Mammary epithelial cell (primary cell): ENCODE measurements at regions of chr12 and their contacts with region 1.

Region 1: DNA sequence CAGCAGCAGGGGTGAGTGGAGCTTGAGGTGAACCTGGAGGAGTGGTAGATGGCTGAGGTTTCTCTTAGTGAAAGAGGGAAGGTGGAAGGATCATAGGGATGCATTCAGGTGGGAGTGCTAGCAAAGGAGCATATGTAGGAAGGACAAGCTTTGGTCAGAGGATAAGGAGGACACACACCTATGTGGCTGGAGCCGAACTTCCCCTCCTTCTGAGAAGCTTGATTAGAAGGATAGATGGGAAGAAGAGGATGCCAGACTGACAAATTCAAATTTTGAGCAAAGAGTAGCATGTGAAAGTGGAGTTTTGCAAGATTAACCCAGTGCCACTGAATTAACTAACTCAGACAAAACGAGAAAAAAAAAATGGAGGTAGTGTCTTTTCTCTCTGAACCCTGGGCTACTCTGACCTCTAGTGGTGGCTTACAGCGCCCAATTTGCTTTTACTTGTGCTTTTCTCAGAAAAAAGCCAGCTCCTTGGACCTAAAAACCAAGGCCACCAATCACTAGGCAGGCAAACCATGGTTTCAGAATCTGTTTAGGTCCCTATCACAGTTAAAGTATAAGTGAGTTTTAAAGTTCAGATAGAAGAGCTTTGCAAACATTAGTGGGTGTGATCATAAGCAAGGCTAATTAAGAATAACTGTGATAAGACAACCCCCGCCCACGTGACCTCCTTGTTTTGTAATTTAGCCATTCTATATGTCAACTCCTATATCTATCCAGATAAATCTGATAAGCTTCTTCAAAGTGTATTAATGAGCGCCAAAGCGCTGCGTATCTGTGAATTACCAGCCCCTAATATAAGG is 15.5 kb downstream of the EMP1 start:
- DNase-seq: no peak
- H3K4me3 ChIP-seq: no peak overlapping the region
- H3K27ac ChIP-seq: peak overlapping the region; percentile 92
- H3K4me1 ChIP-seq: peaks cover 50% of the 10 kb centered on the region
- H3K27me3 ChIP-seq: no peaks in the 10 kb centered on the region
- CTCF ChIP-seq: peak; percentile 68 to 71

Region 2: DNA sequence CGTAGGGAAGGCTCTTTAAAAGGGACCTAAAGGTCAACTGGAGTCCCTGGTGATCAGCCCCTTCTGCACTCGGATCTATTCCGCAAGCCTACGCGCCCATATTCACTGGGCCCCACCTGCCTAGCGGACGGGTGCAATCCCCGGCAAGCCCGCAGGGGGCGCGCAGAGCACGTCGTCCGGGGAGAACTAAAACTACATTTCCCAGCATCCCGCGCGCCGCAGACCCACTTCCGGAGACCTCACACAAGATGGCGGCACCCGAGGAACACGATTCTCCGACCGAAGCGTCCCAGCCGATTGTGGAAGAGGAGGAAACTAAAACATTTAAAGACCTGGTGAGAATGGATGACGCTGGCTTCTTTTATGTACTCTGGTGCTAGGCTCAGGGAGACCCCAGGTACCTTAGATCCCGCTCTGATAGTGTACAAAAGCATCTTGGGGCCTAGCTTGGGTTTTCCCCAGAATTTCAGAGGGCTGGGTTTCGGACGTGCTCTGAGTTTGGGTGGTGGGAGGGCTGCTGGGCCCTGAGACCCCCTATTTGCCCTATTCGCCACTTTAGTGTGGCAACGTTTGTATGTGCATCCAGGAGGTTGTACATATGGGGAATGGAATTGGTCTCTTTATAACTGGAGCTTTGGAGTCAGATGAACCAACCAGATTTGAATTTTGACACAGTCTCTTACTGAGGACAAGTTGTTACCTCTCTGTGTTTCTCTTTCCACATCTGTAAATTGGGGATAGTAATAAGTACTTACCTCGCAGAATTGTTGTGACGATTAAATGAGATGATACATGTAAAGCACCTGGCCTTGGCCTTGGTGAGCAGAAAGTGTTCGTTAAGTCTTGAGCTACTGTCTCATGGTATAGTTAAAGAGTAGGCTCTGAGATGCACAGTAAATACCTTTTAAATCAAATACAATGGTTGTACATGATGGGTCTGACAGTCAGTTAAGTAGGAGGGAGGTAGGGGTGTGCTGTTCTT is 398.7 kb before region 1 on chr12 and contains the start of gene DDX47:
- CTCF ChIA-PET with region 1: no interaction called
- dilution Hi-C with region 1: no loop called
- in situ Hi-C with region 1: loop called in 1 of 2 experiments (anchors 25 kb)
- intact Hi-C with region 1: no loop called
- DNase-seq: peak; percentile 86
- H3K4me3 ChIP-seq: peak within 1 kb of the TSS; percentile 60 to 86 (median 71)
- H3K27ac ChIP-seq: peak within 1 kb of the TSS; percentile 93
- H3K4me1 ChIP-seq: peaks cover 21% of the 10 kb centered on the region
- H3K27me3 ChIP-seq: no peaks in the 10 kb centered on the region
- CTCF ChIP-seq: peak; percentile 93 to 96
- total RNA-seq, gene DDX47: 62.1 to 70.3 TPM

Region 3: GRCh38 chr12:12983420-12984035 is 228.5 kb before region 1 on chr12:
- CTCF ChIA-PET with region 1: interaction called, 9 read pairs
- dilution Hi-C with region 1: no loop called
- in situ Hi-C with region 1: no loop called
- intact Hi-C with region 1: loop called (anchors 1 kb)
- DNase-seq: peak; percentile 37
- H3K4me3 ChIP-seq: no peak overlapping the region
- H3K27ac ChIP-seq: no peak overlapping the region
- H3K4me1 ChIP-seq: no peaks in the 10 kb centered on the region
- H3K27me3 ChIP-seq: no peaks in the 10 kb centered on the region
- CTCF ChIP-seq: peak; percentile 55 to 75

Region 4: GRCh38 chr12:13023811-13024530 is 188.1 kb before region 1 on chr12:
- CTCF ChIA-PET with region 1: interaction called, 10 read pairs
- dilution Hi-C with region 1: loop called (anchors 25 kb)
- in situ Hi-C with region 1: no loop called
- intact Hi-C with region 1: loop called (anchors 1 kb)
- DNase-seq: no peak
- H3K4me3 ChIP-seq: no peak overlapping the region
- H3K27ac ChIP-seq: no peak overlapping the region
- H3K4me1 ChIP-seq: no peaks in the 10 kb centered on the region
- H3K27me3 ChIP-seq: no peaks in the 10 kb centered on the region
- CTCF ChIP-seq: no peak

Region 5: GRCh38 chr12:13094347-13094746 is 117.7 kb before region 1 on chr12:
- CTCF ChIA-PET with region 1: interaction called, 22 read pairs
- dilution Hi-C with region 1: no loop called
- in situ Hi-C with region 1: loop called in 1 of 2 experiments (anchors 5 kb)
- intact Hi-C with region 1: loop called (anchors 1 kb)
- DNase-seq: peak; percentile 54
- H3K4me3 ChIP-seq: no peak overlapping the region
- H3K27ac ChIP-seq: peak overlapping the region; percentile 54
- H3K4me1 ChIP-seq: peaks cover 41% of the 10 kb centered on the region
- H3K27me3 ChIP-seq: no peaks in the 10 kb centered on the region
- CTCF ChIP-seq: no peak

Region 6: DNA sequence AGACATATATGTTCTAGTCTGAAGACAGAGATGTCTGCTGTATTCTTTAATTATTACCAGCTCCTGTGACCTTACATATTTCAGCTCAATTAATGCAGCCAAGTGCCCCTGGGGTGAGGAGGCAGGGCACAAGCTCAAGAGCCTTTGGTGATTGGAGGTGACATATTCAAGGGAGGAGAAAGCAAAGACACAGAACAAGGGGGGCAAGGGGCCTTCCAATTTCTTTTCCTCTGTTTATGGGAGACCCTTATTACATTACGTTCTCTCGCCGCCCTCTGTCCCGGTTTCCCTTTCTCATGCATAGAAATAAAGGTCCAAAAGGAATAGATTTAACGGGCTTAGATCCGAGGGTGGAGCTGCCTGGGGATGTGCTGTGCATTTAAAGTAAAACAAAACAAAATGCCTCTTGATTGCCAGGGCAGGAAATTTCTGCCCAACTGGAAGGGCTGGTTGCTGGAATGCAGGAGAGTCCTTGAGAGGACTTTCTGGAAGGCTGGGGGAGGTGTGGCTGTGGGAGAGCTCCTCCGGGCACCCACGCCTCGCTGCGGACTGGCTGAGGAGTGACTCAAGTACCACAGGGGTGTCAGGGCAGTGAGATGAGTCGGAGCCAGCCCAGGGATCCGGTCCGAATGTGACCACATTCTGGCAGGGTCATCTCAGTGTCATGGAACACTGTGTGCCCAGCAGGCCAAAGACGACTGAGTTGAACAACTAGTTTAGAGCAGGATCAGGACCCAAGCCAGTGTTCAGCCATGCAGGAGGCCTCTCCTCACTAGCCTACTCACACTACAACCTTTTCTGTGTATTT is 76.5 kb before region 1 on chr12:
- CTCF ChIA-PET with region 1: no interaction called
- dilution Hi-C with region 1: loop called (anchors 5 kb)
- in situ Hi-C with region 1: no loop called
- intact Hi-C with region 1: loop called (anchors 2 kb)
- DNase-seq: peak; percentile 96
- H3K4me3 ChIP-seq: peak overlapping the region in 2 of 3 experiments; percentile 8 to 24
- H3K27ac ChIP-seq: peak overlapping the region; percentile 80
- H3K4me1 ChIP-seq: peaks cover 45% of the 10 kb centered on the region
- H3K27me3 ChIP-seq: no peaks in the 10 kb centered on the region
- CTCF ChIP-seq: peak in 1 of 2 donors; percentile 42

Region 7: DNA sequence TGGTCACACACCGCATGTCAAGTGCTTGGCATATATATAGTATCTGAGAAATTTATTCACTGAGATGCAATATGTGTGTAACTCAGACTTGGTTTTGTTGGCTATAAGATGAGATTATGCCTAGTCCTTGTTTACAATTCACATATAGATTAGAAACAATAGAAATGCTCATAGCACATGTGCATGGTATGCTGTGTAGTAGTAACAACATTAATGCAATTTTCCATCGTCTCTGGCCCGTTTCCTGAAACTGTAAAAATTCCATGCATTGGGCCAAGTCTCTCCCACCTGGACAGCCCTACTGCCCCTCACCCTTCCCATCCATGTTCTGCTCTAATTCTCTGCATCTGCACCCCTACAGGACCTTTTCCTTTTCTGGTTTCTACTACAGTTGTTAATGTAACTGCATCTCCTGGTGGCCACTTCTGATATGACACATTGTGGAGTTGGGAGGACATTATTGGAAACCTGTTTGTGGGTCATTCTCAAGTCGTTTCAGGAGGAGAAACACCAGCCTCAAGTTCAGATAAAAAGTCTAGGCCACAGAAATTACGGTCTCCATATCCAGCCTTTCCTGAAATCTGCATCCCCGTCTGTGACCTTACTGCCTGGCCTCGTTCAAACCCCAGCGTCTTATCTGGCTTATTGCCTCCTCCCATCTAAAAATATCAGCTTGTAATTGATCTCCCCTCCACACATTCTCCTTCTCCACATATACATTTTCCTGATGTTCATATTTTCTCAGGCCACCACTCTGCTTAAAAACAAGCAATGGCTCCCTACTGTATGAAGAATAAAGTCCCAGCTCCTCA is 22.0 kb after region 1 on chr12:
- CTCF ChIA-PET with region 1: no interaction called
- dilution Hi-C with region 1: no loop called
- in situ Hi-C with region 1: no loop called
- intact Hi-C with region 1: loop called (anchors 1 kb)
- DNase-seq: peak; percentile 55
- H3K4me3 ChIP-seq: no peak overlapping the region
- H3K27ac ChIP-seq: no peak overlapping the region
- H3K4me1 ChIP-seq: no peaks in the 10 kb centered on the region
- H3K27me3 ChIP-seq: no peaks in the 10 kb centered on the region
- CTCF ChIP-seq: peak; percentile 93 to 98